Endothelial cell of umbilical vein (primary cell): ENCODE measurements at regions of chr2 and their contacts with region 1.

Region 1: GRCh38 chr2:168961450-168962229 is 60.5 kb downstream of the G6PC2 start:
- DNase-seq: peak; percentile 89
- H3K4me3 ChIP-seq: no peak overlapping the region
- H3K27ac ChIP-seq: no peak overlapping the region
- H3K4me1 ChIP-seq: peaks cover 5% of the 10 kb centered on the region
- H3K27me3 ChIP-seq: no peaks in the 10 kb centered on the region
- CTCF ChIP-seq: peak; percentile 63 to 68
- POLR2A ChIP-seq: no peak

Region 2: DNA sequence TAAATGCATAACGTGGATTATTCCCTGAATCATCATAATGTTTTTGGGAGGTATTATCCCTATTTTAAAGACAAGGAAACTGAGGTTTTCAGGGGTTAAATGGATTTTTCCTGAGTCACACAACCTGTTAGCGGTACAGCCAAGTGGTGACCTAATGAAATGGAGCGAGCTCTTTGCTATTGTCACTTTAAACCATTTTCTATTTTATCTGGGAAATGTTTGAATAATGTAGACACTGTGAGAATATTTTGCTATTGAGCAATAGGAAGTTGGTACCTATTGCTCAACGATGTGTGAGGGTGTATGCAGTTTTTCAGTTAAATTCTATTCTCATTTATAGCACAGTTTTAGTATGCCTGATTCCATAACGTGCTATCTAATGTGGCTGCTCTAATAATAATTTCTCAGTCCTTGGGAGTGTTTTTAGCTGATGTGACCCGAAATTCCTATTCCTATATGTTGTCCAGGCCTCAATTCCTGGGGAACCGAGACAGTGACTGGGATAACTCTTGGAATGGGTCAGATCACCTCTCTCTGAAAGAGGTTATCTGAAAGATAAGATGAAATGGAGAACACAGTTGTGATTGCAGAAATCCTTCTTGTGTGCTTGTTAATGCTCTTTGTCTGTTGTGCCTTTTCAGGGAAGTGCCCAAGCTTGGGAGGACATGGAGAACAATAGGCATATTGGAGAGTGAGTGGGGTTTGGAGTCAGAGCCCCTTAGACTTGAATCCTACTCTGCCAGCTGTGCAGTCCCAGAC is 31.1 kb after region 1 on chr2:
- CTCF ChIA-PET with region 1: interaction called, 4 read pairs
- POLR2A ChIA-PET with region 1: no interaction called
- dilution Hi-C with region 1: no loop called
- intact Hi-C with region 1: loop called (anchors 1 kb)
- DNase-seq: peak; percentile 73
- H3K4me3 ChIP-seq: no peak overlapping the region
- H3K27ac ChIP-seq: peak overlapping the region; percentile 90
- H3K4me1 ChIP-seq: peaks cover 63% of the 10 kb centered on the region
- H3K27me3 ChIP-seq: no peaks in the 10 kb centered on the region
- CTCF ChIP-seq: no peak
- POLR2A ChIP-seq: no peak

Region 3: GRCh38 chr2:169001116-169001815 is 39.6 kb after region 1 on chr2:
- CTCF ChIA-PET with region 1: interaction called, 4 read pairs
- POLR2A ChIA-PET with region 1: no interaction called
- dilution Hi-C with region 1: no loop called
- intact Hi-C with region 1: loop called (anchors 1 kb)
- DNase-seq: peak; percentile 88
- H3K4me3 ChIP-seq: peak overlapping the region in 1 of 3 experiments; percentile 43
- H3K27ac ChIP-seq: peak overlapping the region; percentile 100
- H3K4me1 ChIP-seq: peaks cover 66% of the 10 kb centered on the region
- H3K27me3 ChIP-seq: no peaks in the 10 kb centered on the region
- CTCF ChIP-seq: no peak
- POLR2A ChIP-seq: no peak

Region 4: GRCh38 chr2:169047256-169048250 is 85.9 kb after region 1 on chr2:
- CTCF ChIA-PET with region 1: no interaction called
- POLR2A ChIA-PET with region 1: no interaction called
- dilution Hi-C with region 1: no loop called
- intact Hi-C with region 1: no loop called
- DNase-seq: no peak
- H3K4me3 ChIP-seq: no peak overlapping the region
- H3K27ac ChIP-seq: no peak overlapping the region
- H3K4me1 ChIP-seq: peaks cover 5% of the 10 kb centered on the region
- H3K27me3 ChIP-seq: no peaks in the 10 kb centered on the region
- CTCF ChIP-seq: no peak
- POLR2A ChIP-seq: no peak